ENCODE measurements at regions of chr17 and their contacts with region 1.

Region 1: GRCh38 chr17:7745748-7746470 is 28.4 kb downstream of the DNAH2 start:
- DNase-seq: no peak
- H3K4me3 ChIP-seq: no peak overlapping the region
- H3K4me3 Mint-ChIP-seq: no peak overlapping the region
- H3K27ac Mint-ChIP-seq: no peak overlapping the region
- H3K4me1 ChIP-seq: peaks cover 3% of the 10 kb centered on the region; the same call in 1 of the 2 replicates
- H3K4me1 Mint-ChIP-seq: peaks cover 8% of the 10 kb centered on the region
- H3K27me3 ChIP-seq: no peaks in the 10 kb centered on the region
- H3K27me3 Mint-ChIP-seq: peaks cover under 1% of the 10 kb centered on the region
- CTCF ChIP-seq: no peak

Region 2: GRCh38 chr17:7816926-7817642 is 71.2 kb after region 1 on chr17:
- CTCF ChIA-PET with region 1: interaction called, 5 read pairs
- POLR2A ChIA-PET with region 1: no interaction called
- intact Hi-C with region 1: loop called (anchors 1 kb)
- DNase-seq: peak; percentile 50 to 51
- H3K4me3 ChIP-seq: no peak overlapping the region
- H3K4me3 Mint-ChIP-seq: no peak overlapping the region
- H3K27ac Mint-ChIP-seq: no peak overlapping the region
- H3K4me1 ChIP-seq: peaks cover 15% of the 10 kb centered on the region
- H3K4me1 Mint-ChIP-seq: peaks cover 16% of the 10 kb centered on the region
- H3K27me3 ChIP-seq: no peaks in the 10 kb centered on the region
- H3K27me3 Mint-ChIP-seq: no peaks in the 10 kb centered on the region
- CTCF ChIP-seq: no peak

Region 3: GRCh38 chr17:7834962-7835813 is 89.3 kb after region 1 on chr17:
- CTCF ChIA-PET with region 1: interaction called, 12 read pairs
- POLR2A ChIA-PET with region 1: no interaction called
- intact Hi-C with region 1: no loop called
- DNase-seq: peak; percentile 90 to 95
- H3K4me3 ChIP-seq: peak overlapping the region; percentile 82
- H3K4me3 Mint-ChIP-seq: peak overlapping the region; percentile 98
- H3K27ac Mint-ChIP-seq: peak overlapping the region; percentile 99
- H3K4me1 ChIP-seq: peaks cover 23% of the 10 kb centered on the region
- H3K4me1 Mint-ChIP-seq: peaks cover 19% of the 10 kb centered on the region
- H3K27me3 ChIP-seq: no peaks in the 10 kb centered on the region
- H3K27me3 Mint-ChIP-seq: no peaks in the 10 kb centered on the region
- CTCF ChIP-seq: peak; percentile 31 to 69

Region 4: DNA sequence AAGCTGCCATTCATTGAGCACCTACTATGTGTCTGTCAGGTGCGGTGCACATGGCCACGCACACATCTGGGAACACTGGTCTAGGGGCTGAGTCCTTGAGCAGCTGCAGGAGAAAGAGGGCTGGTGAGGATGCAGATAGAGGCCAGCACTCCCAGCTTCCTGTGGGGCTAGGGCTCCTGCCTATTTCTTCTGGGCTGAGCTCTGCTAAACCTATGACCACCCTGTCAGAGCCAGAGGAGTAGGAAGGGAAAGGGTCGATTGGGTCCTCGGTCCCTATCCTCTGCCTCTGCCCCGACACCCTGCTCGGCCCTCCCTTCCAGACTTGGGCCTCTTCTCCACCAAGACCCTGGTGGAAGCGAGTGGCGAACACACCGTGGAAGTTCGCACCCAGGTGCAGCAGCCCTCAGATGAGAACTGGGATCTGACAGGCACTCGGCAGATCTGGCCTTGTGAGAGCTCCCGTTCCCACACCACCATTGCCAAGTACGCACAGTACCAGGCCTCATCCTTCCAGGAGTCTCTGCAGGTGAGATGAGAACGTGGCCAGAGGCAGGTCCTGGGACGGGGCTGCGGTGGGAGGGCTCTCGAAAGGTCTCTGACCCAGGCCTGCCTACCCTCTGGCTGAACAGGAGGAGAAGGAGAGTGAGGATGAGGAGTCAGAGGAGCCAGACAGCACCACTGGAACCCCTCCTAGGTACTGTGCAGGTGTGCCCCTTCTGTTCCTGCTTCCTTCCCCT is 105.0 kb after region 1 on chr17:
- CTCF ChIA-PET with region 1: no interaction called
- POLR2A ChIA-PET with region 1: no interaction called
- intact Hi-C with region 1: no loop called
- DNase-seq: no peak
- H3K4me3 ChIP-seq: no peak overlapping the region
- H3K4me3 Mint-ChIP-seq: no peak overlapping the region
- H3K27ac Mint-ChIP-seq: no peak overlapping the region
- H3K4me1 ChIP-seq: no peaks in the 10 kb centered on the region
- H3K4me1 Mint-ChIP-seq: peaks cover 3% of the 10 kb centered on the region
- H3K27me3 ChIP-seq: no peaks in the 10 kb centered on the region
- H3K27me3 Mint-ChIP-seq: no peaks in the 10 kb centered on the region
- CTCF ChIP-seq: no peak

Region 5: GRCh38 chr17:7915611-7916382 is 169.9 kb after region 1 on chr17 and contains the start of gene RNF227:
- CTCF ChIA-PET with region 1: no interaction called
- POLR2A ChIA-PET with region 1: no interaction called
- intact Hi-C with region 1: loop called (anchors 10 kb)
- DNase-seq: peak; percentile 81 to 85
- H3K4me3 ChIP-seq: peak within 1 kb of the TSS; percentile 61
- H3K4me3 Mint-ChIP-seq: peak within 1 kb of the TSS; percentile 85
- H3K27ac Mint-ChIP-seq: peak within 1 kb of the TSS; percentile 92
- H3K4me1 ChIP-seq: 0 out of 2 replicates have a peak, but pooled peaks cover 3% of the 10 kb centered on the region
- H3K4me1 Mint-ChIP-seq: no peaks in the 10 kb centered on the region
- H3K27me3 ChIP-seq: no peaks in the 10 kb centered on the region
- H3K27me3 Mint-ChIP-seq: no peaks in the 10 kb centered on the region
- CTCF ChIP-seq: no peak
- total RNA-seq, gene RNF227: 4.0 and 5.0 TPM in 2 replicates

Region 6: DNA sequence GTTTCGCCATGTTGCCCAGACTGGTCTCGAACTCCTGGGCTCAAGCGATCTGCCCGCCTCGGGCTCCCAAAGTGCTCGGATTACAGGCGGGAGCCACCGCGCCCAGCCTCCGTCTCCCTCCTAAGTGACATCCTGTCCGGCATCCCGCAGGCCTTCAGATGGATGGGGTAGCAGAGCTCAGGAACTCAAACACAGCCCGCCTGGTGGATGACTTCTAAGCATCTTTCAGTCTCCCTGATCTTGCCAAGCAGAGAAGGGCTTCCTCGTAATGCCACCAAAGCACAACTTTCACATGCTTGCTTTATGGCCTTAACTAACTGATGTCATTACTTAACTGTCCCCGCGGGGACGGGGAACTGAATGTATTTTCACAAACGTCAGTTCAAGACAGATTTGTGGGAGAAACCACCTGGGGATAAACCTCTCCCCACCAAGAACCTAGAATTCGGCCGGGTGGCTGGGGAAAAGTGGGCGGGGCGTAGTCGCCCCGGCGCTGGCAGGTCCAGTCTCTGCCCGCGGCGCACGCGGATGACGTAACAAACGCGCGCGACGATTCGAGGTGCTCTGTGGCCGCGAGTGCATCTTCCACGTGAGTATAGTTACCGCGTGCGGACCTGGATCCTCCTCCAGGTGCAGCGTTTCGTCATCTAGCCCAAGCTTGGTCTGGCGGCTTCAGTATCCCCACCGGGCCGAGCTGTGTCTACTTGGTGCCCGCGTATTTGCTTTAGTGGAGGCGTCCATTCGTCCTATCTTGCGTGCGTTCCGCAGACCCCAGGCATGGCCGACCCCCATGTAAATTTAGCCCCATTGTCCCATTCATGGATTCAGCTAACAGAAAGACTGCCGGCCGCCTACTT is 503.1 kb after region 1 on chr17 and contains the start of gene PFAS:
- CTCF ChIA-PET with region 1: interaction called, 39 read pairs
- POLR2A ChIA-PET with region 1: no interaction called
- intact Hi-C with region 1: no loop called
- DNase-seq: peak; percentile 91 to 93
- H3K4me3 ChIP-seq: peak within 1 kb of the TSS; percentile 61
- H3K4me3 Mint-ChIP-seq: peak within 1 kb of the TSS; percentile 98
- H3K27ac Mint-ChIP-seq: peak within 1 kb of the TSS; percentile 96
- H3K4me1 ChIP-seq: no peaks in the 10 kb centered on the region
- H3K4me1 Mint-ChIP-seq: peaks cover 9% of the 10 kb centered on the region
- H3K27me3 ChIP-seq: no peaks in the 10 kb centered on the region
- H3K27me3 Mint-ChIP-seq: no peaks in the 10 kb centered on the region
- CTCF ChIP-seq: no peak
- total RNA-seq, gene PFAS: 38.8 and 44.1 TPM in 2 replicates

Measured in Caco-2 (cell line).